ENCODE measurements at regions of chr3 and their contacts with region 1.

Region 1: GRCh38 chr3:1087066-1087560 is 5.7 kb upstream of the CNTN6 start:
- DNase-seq: peak; percentile 74
- H3K4me3 ChIP-seq: no peak overlapping the region
- H3K27ac ChIP-seq: peak overlapping the region; percentile 64
- H3K4me1 ChIP-seq: peaks cover 15% of the 10 kb centered on the region
- H3K27me3 ChIP-seq: no peaks in the 10 kb centered on the region
- CTCF ChIP-seq: peak; percentile 56; the same call in 1 of the 2 replicates

Region 2: DNA sequence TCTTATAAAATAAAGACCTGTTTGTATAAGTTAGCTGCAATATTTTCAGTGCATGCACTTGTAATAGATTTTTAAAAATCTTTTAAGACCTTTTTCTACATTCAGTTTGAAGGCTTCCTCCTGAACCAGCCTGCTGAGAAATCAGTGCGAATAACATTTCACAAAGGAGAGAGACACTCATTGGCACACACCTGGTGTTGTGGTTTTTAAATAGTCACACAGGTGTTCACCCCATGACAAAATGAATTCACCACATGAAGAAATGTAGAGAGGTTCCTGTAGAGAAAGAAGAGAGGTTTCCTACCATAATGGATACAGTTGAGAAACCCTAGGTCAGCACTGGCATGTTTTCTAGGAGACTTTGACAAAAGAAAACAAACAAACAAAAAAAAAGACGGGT is 243.0 kb after region 1 on chr3:
- CTCF ChIA-PET with region 1: no interaction called
- POLR2A ChIA-PET with region 1: no interaction called
- intact Hi-C with region 1: loop called (anchors 5 kb)
- DNase-seq: no peak
- H3K4me3 ChIP-seq: no peak overlapping the region
- H3K27ac ChIP-seq: no peak overlapping the region
- H3K4me1 ChIP-seq: peaks cover 23% of the 10 kb centered on the region
- H3K27me3 ChIP-seq: no peaks in the 10 kb centered on the region
- CTCF ChIP-seq: no peak

Region 3: GRCh38 chr3:2098398-2099027 is 1011.4 kb after region 1 on chr3 and contains the start of gene CNTN4:
- CTCF ChIA-PET with region 1: no interaction called
- POLR2A ChIA-PET with region 1: no interaction called
- intact Hi-C with region 1: loop called (anchors 5 kb)
- DNase-seq: peak; percentile 89
- H3K4me3 ChIP-seq: peak within 1 kb of the TSS; percentile 52
- H3K27ac ChIP-seq: peak within 1 kb of the TSS; percentile 14
- H3K4me1 ChIP-seq: peaks cover 4% of the 10 kb centered on the region
- H3K27me3 ChIP-seq: peaks cover 16% of the 10 kb centered on the region
- CTCF ChIP-seq: no peak
- total RNA-seq, gene CNTN4: 5.7 and 6.1 TPM in 2 replicates

Region 4: GRCh38 chr3:2156244-2156847 is 1069.2 kb after region 1 on chr3:
- CTCF ChIA-PET with region 1: no interaction called
- POLR2A ChIA-PET with region 1: no interaction called
- intact Hi-C with region 1: loop called (anchors 5 kb)
- DNase-seq: peak; percentile 77
- H3K4me3 ChIP-seq: peak overlapping the region; percentile 34
- H3K27ac ChIP-seq: no peak overlapping the region
- H3K4me1 ChIP-seq: peaks cover 5% of the 10 kb centered on the region
- H3K27me3 ChIP-seq: no peaks in the 10 kb centered on the region
- CTCF ChIP-seq: peak; percentile 93

Measured in A673 (cell line).